Motor neuron (in vitro differentiated cells): ENCODE measurements at regions of chr11 and their contacts with region 1.

Region 1: DNA sequence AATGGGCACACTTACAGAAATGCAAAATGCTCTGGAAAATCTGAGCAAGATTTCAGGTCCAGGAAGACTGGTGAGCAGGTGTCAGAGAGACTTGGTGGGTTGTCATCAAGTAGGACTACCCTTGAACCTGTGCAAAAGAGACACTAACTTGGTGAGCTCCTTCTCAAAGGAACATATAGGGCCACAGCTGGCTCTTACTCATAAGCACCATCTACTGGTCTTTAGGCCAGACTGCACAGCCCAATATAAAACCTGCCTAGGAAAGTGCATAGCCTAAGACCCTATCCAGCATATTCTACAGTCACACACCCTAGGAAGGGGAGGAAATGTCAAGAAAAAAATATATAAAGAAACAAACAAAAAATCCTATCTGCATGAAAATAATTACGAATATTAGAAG is 18.2 kb upstream of the OR10W1 start:
- ATAC-seq: peak in 7 of 8 experiments; percentile 37 to 92 (median 59)
- H3K4me3 ChIP-seq: no peak overlapping the region
- H3K27ac ChIP-seq: no peak overlapping the region
- H3K4me1 ChIP-seq: no peaks in the 10 kb centered on the region

Region 2: DNA sequence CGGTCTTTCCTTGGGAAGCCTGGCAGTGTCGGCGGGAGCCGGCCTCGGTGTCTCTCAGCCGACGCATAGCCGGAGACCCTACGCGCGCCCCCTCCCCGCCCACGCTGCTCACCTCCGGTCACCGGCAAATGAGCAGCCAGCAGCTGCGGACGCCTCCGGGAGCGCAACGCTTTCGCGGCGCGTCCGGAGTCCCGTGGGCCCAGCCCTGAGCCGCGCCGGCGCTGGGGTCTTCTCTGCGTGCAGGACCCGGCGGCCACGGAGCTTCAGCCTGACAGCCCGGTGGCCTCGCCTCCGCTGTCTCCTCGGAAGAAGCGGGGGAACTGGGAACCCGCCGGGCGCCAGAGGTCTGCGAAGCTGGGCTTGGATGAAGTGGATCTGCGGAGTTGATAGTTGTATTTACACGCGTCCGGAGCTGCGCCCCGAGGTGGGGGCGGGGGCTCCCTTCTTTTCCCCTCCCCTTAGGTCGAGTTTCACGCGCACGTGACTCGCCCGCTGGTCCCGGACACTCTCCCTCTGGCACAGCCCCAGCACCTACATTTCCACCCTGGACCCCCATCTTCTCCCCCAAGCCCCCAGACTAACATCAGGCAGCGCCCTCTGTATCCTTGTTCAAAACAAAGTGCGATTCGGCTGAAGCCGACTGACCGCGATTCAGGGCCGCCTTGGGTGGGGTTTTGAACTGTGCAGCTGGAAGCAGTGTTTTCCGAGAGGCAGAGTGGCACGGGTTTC is 770.8 kb before region 1 on chr11 and contains the start of gene SLC43A1:
- in situ Hi-C with region 1: no loop called
- ATAC-seq: peak; percentile 58 to 70 (median 61)
- H3K4me3 ChIP-seq: peak within 1 kb of the TSS; percentile 39 to 57 (median 48)
- H3K27ac ChIP-seq: no peak within 1 kb of the TSS
- H3K4me1 ChIP-seq: peaks cover 5 to 10% of the 10 kb centered on the region in 2 donors
- total RNA-seq, gene SLC43A1: 0.32 to 13.7 (median 2.1) TPM

Region 3: DNA sequence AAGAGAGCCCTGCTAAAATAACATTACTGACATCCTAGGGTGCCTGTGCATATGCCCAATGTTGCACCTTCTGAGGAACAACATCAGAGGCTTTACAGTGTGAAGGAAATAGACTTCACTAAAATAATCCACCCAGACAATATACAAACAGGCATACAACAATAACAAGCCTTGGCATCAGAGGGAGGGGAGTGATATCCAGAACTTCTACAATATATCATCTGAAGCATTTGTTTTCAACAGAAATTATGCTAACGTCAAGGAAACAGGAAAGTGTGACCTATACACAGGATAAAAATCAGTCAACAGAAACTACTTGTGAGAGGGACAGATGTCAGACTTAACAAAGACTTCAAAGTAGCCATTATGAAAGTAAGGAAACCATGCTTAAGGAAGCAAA is 443.4 kb before region 1 on chr11:
- in situ Hi-C with region 1: loop called in 1 of 9 experiments (anchors 25 kb)
- ATAC-seq: no peak
- H3K4me3 ChIP-seq: no peak overlapping the region
- H3K27ac ChIP-seq: no peak overlapping the region
- H3K4me1 ChIP-seq: no peaks in the 10 kb centered on the region

Region 4: DNA sequence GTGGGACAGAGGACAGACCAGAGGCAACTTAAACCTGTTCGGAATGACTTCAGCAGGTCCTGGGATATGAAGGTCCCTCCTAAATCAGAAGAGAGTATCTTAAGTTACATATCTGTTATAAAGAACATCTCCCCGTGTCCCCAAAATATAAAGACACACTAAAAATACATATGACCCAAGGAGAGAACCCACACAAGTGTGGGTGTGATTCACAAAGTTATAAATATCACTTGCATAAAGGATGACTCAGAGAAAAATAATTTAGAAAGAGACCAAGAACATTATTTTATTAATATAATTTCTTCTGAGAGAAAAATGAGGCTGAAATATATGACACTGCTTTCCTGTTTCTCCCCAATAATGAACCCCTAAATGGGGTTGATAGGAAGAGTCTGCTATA is 207.4 kb after region 1 on chr11:
- in situ Hi-C with region 1: no loop called
- ATAC-seq: peak in 2 of 8 experiments; percentile 32 to 49
- H3K4me3 ChIP-seq: no peak overlapping the region
- H3K27ac ChIP-seq: no peak overlapping the region
- H3K4me1 ChIP-seq: no peaks in the 10 kb centered on the region

Region 5: GRCh38 chr11:58524232-58525036 is 238.2 kb after region 1 on chr11:
- in situ Hi-C with region 1: loop called in 1 of 9 experiments (anchors 25 kb)
- ATAC-seq: peak; percentile 61 to 97 (median 86)
- H3K4me3 ChIP-seq: no peak overlapping the region
- H3K27ac ChIP-seq: no peak overlapping the region
- H3K4me1 ChIP-seq: no peaks in the 10 kb centered on the region

Region 6: DNA sequence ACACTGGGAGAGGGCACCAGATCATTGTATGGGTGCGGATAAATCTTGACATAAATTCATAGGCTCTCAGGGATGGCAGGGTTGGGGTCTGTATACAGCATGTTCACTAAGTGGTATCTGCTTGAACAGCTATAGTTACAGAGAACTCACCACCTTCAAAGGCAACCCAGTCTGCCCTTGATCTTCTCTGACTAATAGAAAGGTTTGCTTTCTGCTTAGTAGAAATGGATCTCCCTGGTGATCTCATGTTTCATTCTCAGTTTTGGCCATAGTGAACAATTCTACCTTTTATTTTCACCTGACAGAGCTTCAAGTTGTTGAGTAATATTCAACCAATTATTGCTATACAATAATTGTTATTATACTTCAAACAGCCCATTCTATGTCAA is 368.7 kb after region 1 on chr11:
- in situ Hi-C with region 1: no loop called
- ATAC-seq: no peak
- H3K4me3 ChIP-seq: no peak overlapping the region
- H3K27ac ChIP-seq: no peak overlapping the region
- H3K4me1 ChIP-seq: no peaks in the 10 kb centered on the region